ENCODE measurements at regions of chr12 and their contacts with region 1.

Region 1: DNA sequence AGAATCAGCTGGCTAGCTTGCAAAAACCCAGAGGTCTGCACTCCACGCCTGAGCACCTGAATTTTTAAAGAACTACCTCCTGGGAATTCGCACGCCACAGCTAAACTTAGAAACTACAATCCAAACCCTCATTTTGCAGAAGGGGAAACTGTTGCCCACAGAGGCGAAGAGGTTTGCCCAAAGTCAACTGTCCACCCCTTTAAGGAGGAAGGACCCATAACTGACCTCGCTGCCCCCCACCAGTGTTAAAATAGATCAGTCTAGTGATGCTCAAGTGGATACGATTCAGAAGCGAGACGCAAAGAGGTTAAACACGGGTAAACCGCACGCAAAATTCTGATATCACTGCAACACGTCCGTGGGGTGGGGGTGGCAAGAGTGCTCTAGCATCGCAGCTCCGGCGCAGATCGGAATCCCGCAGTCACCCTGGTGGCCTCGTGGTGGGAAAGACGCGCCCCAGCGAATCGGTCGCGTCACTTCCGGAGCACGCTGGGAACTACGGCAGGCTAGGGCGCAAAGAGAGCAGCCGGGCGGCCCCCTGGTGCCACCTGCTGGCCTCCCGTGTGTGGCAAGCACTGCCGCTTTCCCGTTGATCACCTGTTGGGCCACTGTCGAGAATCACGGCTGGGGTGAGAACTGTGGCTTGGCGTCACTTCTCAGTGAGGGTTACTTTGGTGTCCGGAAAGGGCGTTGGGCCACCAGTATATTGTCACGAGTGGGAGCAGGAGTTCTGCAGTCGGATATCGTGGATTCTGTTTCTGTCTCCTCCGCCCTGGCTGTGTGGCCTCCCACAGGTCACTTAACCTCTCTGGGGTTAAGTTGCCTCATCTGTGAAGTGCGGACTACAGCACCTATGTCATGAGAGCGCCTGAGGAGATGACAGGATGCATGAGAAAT is at the start of gene ALKBH2:
- DNase-seq: peak; percentile 89 to 95 (median 94)
- H3K4me3 ChIP-seq: peak within 1 kb of the TSS; percentile 35 to 88 (median 68)
- H3K27ac ChIP-seq: peak within 1 kb of the TSS in 53 of 59 donors; percentile 1 to 88 (median 65)
- H3K27me3 ChIP-seq: no peaks in the 10 kb centered on the region
- CTCF ChIP-seq: peak; percentile 96 to 100 (median 99)
- total RNA-seq, gene ALKBH2: 6.8 to 20.9 (median 12.4) TPM

Region 2: GRCh38 chr12:108562348-108563135 is 530.7 kb before region 1 on chr12 and contains the start of gene ISCU:
- intact Hi-C with region 1: loop called (anchors 5 kb)
- DNase-seq: peak; percentile 91 to 99 (median 96)
- H3K4me3 ChIP-seq: peak within 1 kb of the TSS; percentile 69 to 100 (median 97)
- H3K27ac ChIP-seq: peak within 1 kb of the TSS; percentile 63 to 99 (median 96)
- H3K27me3 ChIP-seq: no peaks in the 10 kb centered on the region
- CTCF ChIP-seq: peak in 30 of 56 donors; percentile 9 to 60 (median 30)
- total RNA-seq, gene ISCU: 120 to 322 (median 236) TPM

Region 3: GRCh38 chr12:108664338-108665258 is 428.7 kb before region 1 on chr12:
- intact Hi-C with region 1: loop called in 1 of 2 experiments (anchors 10 kb)
- DNase-seq: peak; percentile 52 to 92 (median 82)
- H3K4me3 ChIP-seq: peak overlapping the region in 1 of 59 donors; percentile 10
- H3K27ac ChIP-seq: peak overlapping the region; percentile 18 to 90 (median 77)
- H3K27me3 ChIP-seq: no peaks in the 10 kb centered on the region
- CTCF ChIP-seq: peak; percentile 87 to 99 (median 96)

Region 4: DNA sequence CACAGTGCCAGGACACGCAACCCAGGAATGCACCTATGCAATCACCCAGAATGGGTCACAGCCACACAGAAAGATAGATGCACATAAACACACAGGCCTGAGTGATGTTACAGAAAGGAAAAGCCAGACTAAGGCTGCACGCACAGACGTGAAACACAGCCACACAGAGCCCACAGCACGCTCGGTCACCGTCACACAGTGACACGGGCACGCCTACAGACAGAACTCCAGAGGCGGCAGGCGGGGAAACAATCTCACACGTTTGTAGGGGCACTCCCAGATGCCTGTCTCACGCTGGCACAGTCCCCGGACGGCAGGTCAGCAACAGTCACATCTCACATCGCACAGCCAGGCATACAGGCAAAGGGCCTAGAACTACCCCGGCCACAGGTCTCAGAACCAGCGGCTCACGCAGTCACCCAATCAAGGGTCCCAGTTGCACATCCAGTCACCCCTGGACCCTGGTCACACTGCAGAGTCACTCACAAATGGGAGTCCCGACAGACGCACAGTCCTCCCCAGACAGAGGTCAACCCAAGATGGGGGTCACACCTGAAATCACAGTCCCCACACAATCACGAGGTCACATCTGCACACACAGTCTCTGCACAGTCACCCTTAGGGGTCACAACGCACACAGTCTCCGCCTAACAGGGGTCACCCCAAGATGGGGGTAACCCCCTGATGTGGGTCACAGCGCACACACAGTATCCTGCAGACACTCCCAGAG is 236.7 kb before region 1 on chr12:
- intact Hi-C with region 1: loop called in 1 of 2 experiments (anchors 10 kb)
- DNase-seq: peak in 9 of 10 donors; percentile 39 to 82 (median 69)
- H3K4me3 ChIP-seq: peak overlapping the region; percentile 60 to 95 (median 81)
- H3K27ac ChIP-seq: peak overlapping the region in 58 of 59 donors; percentile 47 to 95 (median 87)
- H3K27me3 ChIP-seq: no peaks in the 10 kb centered on the region
- CTCF ChIP-seq: no peak

Region 5: DNA sequence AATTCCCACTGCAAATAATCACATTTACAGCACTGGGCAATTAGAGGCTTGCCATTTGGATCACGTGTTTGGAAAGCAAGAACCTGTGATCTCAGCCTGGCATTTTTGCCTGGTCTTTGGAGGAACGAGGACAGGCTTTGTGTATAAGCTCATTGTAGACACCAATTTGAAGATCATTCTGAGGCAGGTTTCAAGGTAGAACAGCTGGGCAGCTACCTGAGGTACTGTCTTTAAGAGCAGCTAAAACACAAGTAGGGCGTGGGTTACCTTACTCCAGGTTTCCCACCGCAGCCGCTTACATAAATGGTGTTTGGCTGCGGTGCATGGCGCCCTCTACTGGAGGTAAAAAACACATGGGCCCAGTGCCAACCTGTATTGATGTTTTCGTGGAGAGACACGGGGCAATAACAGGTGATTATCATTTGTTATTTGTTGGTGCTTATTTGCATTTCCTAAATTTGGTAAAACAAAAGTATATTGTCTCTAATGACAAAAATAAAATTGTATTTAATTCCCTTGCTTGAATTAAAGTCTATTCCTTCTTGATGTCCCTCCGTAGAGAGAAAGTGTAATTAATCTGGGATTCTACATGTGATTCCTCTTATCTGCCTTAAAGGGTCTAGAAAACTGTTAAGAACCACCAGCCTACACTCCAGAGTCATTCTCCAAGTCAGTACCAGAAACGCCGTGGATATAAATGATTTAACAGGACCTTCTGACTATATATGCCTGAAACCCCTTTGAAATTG is 142.1 kb before region 1 on chr12:
- intact Hi-C with region 1: loop called (anchors 2 to 5 kb)
- DNase-seq: peak; percentile 51 to 81 (median 70)
- H3K4me3 ChIP-seq: peak overlapping the region in 41 of 59 donors; percentile 1 to 52 (median 31)
- H3K27ac ChIP-seq: peak overlapping the region in 13 of 59 donors; percentile 1 to 52 (median 15)
- H3K27me3 ChIP-seq: no peaks in the 10 kb centered on the region
- CTCF ChIP-seq: peak; percentile 81 to 96 (median 91)

Region 6: GRCh38 chr12:108995370-108995992 is 97.8 kb before region 1 on chr12:
- intact Hi-C with region 1: no loop called
- DNase-seq: no peak
- H3K4me3 ChIP-seq: no peak overlapping the region
- H3K27ac ChIP-seq: no peak overlapping the region
- H3K27me3 ChIP-seq: no peaks in the 10 kb centered on the region
- CTCF ChIP-seq: no peak

Region 7: GRCh38 chr12:109020796-109021380 is 72.4 kb before region 1 on chr12 and contains the start of gene SVOP:
- intact Hi-C with region 1: loop called in 1 of 2 experiments (anchors 2 kb)
- DNase-seq: peak; percentile 76 to 92 (median 87)
- H3K4me3 ChIP-seq: peak within 1 kb of the TSS; percentile 11 to 68 (median 50)
- H3K27ac ChIP-seq: peak within 1 kb of the TSS in 54 of 59 donors; percentile 29 to 85 (median 71)
- H3K27me3 ChIP-seq: no peaks in the 10 kb centered on the region
- CTCF ChIP-seq: peak in 22 of 56 donors; percentile 4 to 55 (median 30)
- total RNA-seq, gene SVOP: 16.3 to 117 (median 63.9) TPM

Region 8: DNA sequence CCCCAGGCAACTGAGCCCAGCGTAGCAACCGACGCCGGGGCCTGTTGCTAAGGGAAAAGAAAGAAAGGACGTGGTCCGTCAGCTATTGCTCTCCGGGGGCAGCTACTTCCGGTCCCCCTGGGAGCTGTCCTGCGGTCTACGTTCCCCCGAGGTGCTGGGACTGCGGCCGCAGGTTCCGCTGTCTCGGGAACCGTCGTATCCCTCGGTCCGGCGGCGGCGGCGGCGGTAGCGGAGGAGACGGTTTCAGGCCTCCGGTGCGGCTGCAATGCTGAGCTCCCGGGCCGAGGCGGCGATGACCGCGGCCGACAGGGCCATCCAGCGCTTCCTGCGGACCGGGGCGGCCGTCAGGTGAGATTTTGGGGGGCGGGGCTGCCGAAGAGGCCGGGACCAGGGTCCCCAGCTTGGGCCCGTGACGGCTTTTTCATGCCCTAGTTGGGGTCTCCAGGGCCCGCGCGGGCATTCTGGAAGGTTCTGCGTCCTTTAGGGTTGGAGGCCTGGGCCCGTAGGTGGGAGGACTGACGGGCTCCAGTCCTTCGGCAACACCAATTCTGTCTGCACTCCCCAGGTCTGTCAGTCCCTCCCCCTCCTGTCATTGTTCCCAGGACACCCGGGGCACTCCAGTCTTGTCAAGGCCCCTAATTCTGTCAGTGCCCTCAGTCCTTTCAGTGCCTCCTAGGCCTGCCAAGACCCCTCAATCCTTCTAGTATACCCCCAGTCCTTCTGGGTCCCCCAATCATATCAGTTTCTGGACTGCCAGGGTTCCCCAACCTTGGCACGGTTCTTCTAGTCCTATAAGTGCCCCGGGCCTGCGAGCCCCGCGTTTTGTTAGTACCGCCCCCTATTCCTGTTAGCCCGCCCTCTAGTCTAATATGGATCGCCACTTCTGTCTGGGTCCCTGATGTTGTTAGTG is 40.6 kb before region 1 on chr12 and contains the start of gene USP30:
- intact Hi-C with region 1: loop called (anchors 2 to 5 kb)
- DNase-seq: peak; percentile 71 to 91 (median 84)
- H3K4me3 ChIP-seq: peak within 1 kb of the TSS; percentile 71 to 100 (median 94)
- H3K27ac ChIP-seq: peak within 1 kb of the TSS; percentile 54 to 99 (median 93)
- H3K27me3 ChIP-seq: no peaks in the 10 kb centered on the region
- CTCF ChIP-seq: peak in 42 of 56 donors; percentile 9 to 60 (median 32)
- total RNA-seq, gene USP30: 22.1 to 52.9 (median 33.6) TPM

Measured in dorsolateral prefrontal cortex (tissue), 120 donors.